ENCODE measurements at regions of chr10 and their contacts with region 1.

Region 1: DNA sequence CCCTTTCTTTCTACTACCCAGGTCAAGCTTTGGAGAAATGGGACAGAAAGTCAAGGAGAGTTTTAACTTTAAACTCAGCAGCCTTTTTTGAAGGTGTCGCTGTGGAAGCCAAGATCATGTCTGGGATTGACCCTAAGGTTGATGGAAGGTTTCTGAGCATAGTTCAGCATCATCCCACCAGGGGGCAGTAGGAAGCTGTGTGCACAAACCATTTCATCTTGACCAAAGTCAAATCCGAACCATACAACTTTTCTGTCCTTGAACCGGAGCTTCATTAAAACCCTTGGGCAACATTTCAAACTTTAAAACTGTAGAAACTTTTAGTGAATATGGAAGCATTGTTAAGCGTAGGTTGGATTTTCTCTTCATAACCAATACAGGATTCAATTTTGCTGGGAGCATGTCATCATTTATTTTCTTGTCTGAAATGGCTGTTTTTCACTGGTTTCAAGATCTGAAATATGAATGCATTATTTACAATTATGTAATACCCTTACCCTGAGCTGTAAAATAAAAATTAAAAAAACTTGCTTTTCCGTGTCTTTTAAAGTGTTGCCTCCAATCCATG is 214.4 kb upstream of the KIAA1217 start:
- DNase-seq: peak; percentile 73 to 85
- H3K4me3 ChIP-seq: no peak overlapping the region
- H3K4me3 Mint-ChIP-seq: no peak overlapping the region
- H3K27ac Mint-ChIP-seq: no peak overlapping the region
- H3K4me1 ChIP-seq: no peaks in the 10 kb centered on the region
- H3K4me1 Mint-ChIP-seq: peaks cover 6% of the 10 kb centered on the region
- H3K27me3 ChIP-seq: no peaks in the 10 kb centered on the region
- H3K27me3 Mint-ChIP-seq: no peaks in the 10 kb centered on the region
- CTCF ChIP-seq: peak; percentile 97 to 98

Region 2: GRCh38 chr10:23945845-23946244 is 48.7 kb before region 1 on chr10:
- CTCF ChIA-PET with region 1: no interaction called
- POLR2A ChIA-PET with region 1: no interaction called
- intact Hi-C with region 1: no loop called
- DNase-seq: no peak
- H3K4me3 ChIP-seq: no peak overlapping the region
- H3K4me3 Mint-ChIP-seq: no peak overlapping the region
- H3K27ac Mint-ChIP-seq: no peak overlapping the region
- H3K4me1 ChIP-seq: no peaks in the 10 kb centered on the region
- H3K4me1 Mint-ChIP-seq: no peaks in the 10 kb centered on the region
- H3K27me3 ChIP-seq: no peaks in the 10 kb centered on the region
- H3K27me3 Mint-ChIP-seq: peaks cover 8% of the 10 kb centered on the region
- CTCF ChIP-seq: no peak

Region 3: DNA sequence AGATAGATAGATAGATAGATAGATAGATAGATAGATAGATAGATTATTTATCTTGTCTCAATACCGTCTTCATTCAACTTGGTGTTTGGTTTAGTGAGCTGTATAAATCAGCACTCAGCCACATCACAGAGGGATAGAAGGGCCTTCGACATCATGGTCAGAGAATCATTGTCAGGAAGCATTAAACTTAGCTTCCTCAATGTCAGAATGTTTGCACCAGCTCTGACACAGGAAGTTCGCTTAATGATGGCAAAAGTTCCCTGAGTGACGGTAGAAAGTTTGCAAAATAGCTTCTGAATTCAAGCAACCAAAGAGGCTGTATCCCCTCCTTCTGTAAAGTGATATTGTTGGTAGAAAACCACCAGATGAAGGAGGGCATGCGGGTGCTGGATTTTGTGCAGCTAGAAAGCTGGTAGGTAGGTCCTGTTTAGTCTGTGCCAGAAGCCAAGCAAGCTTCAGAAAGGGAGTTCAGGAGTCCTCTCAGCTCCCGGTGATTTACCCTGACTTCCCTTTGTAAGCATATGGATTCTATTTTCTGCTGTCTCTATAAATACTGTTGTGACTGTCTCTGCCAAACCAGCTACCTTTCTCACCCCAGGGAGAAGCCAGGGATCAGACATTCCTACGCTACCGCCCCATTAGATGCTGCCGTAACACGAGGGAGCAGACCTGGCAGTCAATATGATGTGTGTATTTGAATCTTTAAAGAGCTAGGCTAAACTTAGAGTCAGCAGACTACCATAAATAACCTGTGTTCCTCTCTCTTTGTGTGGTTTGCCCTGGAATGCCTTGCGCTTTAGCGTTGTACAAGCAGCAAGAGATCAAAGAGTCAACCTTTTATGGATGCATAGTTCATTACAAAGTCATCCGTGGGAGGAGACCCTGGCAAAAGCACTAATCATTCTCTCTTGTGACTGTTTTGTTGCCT is 13.9 kb after region 1 on chr10:
- CTCF ChIA-PET with region 1: interaction called, 18 read pairs
- POLR2A ChIA-PET with region 1: no interaction called
- intact Hi-C with region 1: loop called (anchors 1 kb)
- DNase-seq: peak; percentile 77
- H3K4me3 ChIP-seq: no peak overlapping the region
- H3K4me3 Mint-ChIP-seq: peak overlapping the region; percentile 64
- H3K27ac Mint-ChIP-seq: peak overlapping the region; percentile 82
- H3K4me1 ChIP-seq: peaks cover 25% of the 10 kb centered on the region
- H3K4me1 Mint-ChIP-seq: peaks cover 22% of the 10 kb centered on the region
- H3K27me3 ChIP-seq: no peaks in the 10 kb centered on the region
- H3K27me3 Mint-ChIP-seq: no peaks in the 10 kb centered on the region
- CTCF ChIP-seq: no peak

Region 4: GRCh38 chr10:24324651-24325050 is 330.1 kb after region 1 on chr10:
- CTCF ChIA-PET with region 1: no interaction called
- POLR2A ChIA-PET with region 1: no interaction called
- intact Hi-C with region 1: loop called (anchors 1 kb)
- DNase-seq: no peak
- H3K4me3 ChIP-seq: no peak overlapping the region
- H3K4me3 Mint-ChIP-seq: no peak overlapping the region
- H3K27ac Mint-ChIP-seq: no peak overlapping the region
- H3K4me1 ChIP-seq: no peaks in the 10 kb centered on the region
- H3K4me1 Mint-ChIP-seq: peaks cover 5% of the 10 kb centered on the region
- H3K27me3 ChIP-seq: no peaks in the 10 kb centered on the region
- H3K27me3 Mint-ChIP-seq: no peaks in the 10 kb centered on the region
- CTCF ChIP-seq: no peak

Region 5: GRCh38 chr10:24383681-24384106 is 389.1 kb after region 1 on chr10:
- CTCF ChIA-PET with region 1: interaction called, 6 read pairs
- POLR2A ChIA-PET with region 1: no interaction called
- intact Hi-C with region 1: loop called (anchors 1 kb)
- DNase-seq: peak; percentile 87 to 90
- H3K4me3 ChIP-seq: no peak overlapping the region
- H3K4me3 Mint-ChIP-seq: peak overlapping the region; percentile 58
- H3K27ac Mint-ChIP-seq: peak overlapping the region; percentile 92
- H3K4me1 ChIP-seq: peaks cover 31% of the 10 kb centered on the region
- H3K4me1 Mint-ChIP-seq: peaks cover 23% of the 10 kb centered on the region
- H3K27me3 ChIP-seq: no peaks in the 10 kb centered on the region
- H3K27me3 Mint-ChIP-seq: no peaks in the 10 kb centered on the region
- CTCF ChIP-seq: peak; percentile 60 to 67

Region 6: GRCh38 chr10:24556750-24557742 is 562.5 kb after region 1 on chr10:
- CTCF ChIA-PET with region 1: no interaction called
- POLR2A ChIA-PET with region 1: no interaction called
- intact Hi-C with region 1: loop called (anchors 1 kb)
- DNase-seq: peak; percentile 68 to 71
- H3K4me3 ChIP-seq: no peak overlapping the region
- H3K4me3 Mint-ChIP-seq: no peak overlapping the region
- H3K27ac Mint-ChIP-seq: no peak overlapping the region
- H3K4me1 ChIP-seq: 0 out of 2 replicates have a peak, but pooled peaks cover 2% of the 10 kb centered on the region
- H3K4me1 Mint-ChIP-seq: peaks cover 8% of the 10 kb centered on the region
- H3K27me3 ChIP-seq: no peaks in the 10 kb centered on the region
- H3K27me3 Mint-ChIP-seq: no peaks in the 10 kb centered on the region
- CTCF ChIP-seq: peak; percentile 86 to 87